PC-3 (cell line): ENCODE measurements at regions of chr6 and their contacts with region 1.

Region 1: DNA sequence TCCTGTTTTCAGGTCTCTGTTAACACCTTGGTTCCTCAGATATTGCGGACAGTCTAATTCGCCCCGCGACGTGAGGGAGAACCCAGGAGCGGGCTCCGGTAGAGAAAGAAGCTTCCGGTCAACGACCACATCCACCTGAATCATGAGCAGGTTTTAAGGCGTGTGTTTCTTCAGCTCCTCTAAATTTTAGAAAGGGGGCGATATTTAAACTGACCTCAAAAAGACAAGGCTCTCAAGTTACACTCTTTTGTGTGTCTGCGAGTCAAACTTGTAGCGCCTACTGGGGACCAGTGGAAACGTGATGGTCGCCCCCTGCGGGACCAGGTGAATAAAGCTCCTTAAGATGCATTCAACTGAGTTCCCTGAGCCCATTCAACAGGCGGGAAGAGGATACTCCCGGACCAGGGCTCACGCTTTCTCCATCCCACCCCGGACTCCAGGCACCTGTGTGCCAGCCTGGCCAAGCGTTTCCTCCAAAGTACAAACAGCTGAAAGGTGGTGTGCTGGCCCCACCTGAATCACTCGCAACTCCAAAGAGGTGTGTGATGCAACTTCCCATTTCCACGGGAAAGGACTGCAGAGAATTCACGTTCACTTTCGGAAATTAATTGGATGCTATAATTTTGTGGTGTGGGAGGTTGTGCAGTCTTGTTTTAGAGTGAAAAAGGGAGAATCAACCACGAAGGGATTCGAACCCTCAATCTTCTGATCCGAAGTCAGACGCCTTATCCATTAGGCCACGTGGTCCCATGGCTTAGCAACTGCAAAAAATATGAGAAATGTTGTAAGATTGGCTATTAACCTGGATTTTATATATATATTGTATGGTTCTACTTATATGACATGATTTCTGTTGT is 17.0 kb downstream of the GPX5 start:
- DNase-seq: peak; percentile 95
- ATAC-seq: peak; percentile 91
- H3K4me3 ChIP-seq: peak overlapping the region; percentile 70
- H3K27ac ChIP-seq: no peak overlapping the region
- H3K4me1 ChIP-seq: peaks cover 7% of the 10 kb centered on the region; the same call in 1 of the 2 replicates
- H3K27me3 ChIP-seq: peaks cover 24% of the 10 kb centered on the region
- CTCF ChIP-seq: peak; percentile 85

Region 2: DNA sequence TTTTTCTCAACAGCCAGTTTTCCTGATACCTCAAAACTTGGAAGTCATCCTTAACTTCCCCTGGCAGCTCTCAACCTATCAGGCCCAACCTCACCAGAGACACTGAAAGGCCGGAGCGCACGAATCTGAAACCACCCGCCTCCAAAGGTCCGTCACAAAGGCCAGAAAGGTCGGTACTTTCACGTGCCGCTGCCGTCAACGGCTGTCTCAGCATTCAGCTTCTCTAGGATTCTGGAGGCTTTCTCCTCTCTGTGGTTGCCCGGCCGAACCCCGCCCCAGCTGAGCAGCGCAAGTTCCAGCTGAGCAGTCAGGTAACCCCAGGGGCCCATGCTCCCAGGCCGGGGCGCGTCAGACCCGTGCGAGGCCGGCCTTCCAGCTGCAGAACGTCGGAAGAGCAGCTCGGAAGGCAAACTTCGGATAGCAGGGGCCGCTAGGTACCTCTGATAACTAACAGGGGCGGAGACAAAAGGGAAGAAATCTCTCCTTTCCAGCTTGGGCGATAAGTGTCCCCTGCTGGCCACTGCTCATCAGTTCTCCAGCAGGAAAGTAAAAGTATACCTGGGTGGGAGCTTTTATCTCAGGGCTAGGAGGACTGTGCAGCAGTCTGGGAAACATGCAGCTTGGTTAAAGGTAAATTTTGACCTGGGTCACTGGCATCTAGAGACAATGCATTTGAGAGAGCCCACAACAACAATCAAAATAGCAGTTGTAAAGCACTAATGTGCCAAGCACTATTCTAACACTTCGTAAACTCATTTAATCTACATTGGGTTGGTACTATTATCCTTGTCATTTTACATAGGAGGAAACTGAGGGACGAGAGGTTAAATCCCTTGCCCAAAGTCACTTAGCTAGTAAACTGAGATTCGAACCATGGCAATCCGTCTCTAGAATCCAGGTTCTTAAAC is 159.2 kb before region 1 on chr6:
- CTCF ChIA-PET with region 1: no interaction called
- POLR2A ChIA-PET with region 1: no interaction called
- intact Hi-C with region 1: loop called (anchors 5 kb)
- DNase-seq: peak; percentile 89
- ATAC-seq: peak; percentile 93
- H3K4me3 ChIP-seq: peak overlapping the region; percentile 78
- H3K27ac ChIP-seq: peak overlapping the region; percentile 38
- H3K4me1 ChIP-seq: peaks cover 12% of the 10 kb centered on the region
- H3K27me3 ChIP-seq: no peaks in the 10 kb centered on the region
- CTCF ChIP-seq: peak; percentile 80

Region 3: DNA sequence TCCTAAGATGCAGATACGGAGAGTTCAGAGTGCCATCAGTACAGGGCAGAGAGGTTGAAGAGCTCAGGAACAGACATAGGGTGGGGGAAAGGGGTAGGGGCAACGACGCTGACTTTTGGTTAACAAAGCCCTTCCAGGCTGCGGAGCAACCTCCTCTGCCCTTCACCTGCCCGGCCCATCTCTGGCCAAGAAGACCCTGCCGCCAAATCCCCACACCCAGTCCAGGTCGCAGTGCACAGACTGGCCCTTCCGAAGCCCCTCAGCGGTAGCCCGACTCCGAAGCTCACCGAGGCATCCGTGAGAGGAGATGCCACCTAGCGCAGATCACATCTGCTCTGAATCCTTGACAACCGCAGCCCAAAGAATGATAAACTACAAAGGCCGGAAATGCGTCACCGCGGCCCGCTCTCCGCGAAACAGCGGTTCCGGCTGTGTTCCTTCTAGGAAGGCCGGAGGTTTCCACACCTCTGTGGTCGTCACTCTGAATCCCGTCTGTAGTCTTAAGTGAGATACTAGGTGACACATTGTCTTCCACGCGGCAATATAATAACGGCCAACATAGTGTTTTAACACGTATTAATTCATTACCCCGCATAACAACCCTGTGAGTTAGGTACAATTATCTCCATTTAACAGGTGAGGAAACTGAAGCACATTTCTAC is 99.4 kb before region 1 on chr6 and contains the start of gene ZSCAN23:
- CTCF ChIA-PET with region 1: no interaction called
- POLR2A ChIA-PET with region 1: no interaction called
- intact Hi-C with region 1: loop called (anchors 2 kb)
- DNase-seq: peak; percentile 91
- ATAC-seq: peak; percentile 98
- H3K4me3 ChIP-seq: peak within 1 kb of the TSS; percentile 88
- H3K27ac ChIP-seq: no peak within 1 kb of the TSS
- H3K4me1 ChIP-seq: peaks cover 9% of the 10 kb centered on the region; the same call in 1 of the 2 replicates
- H3K27me3 ChIP-seq: no peaks in the 10 kb centered on the region
- CTCF ChIP-seq: no peak; the same call in 1 of the 2 replicates
- total RNA-seq, gene ZSCAN23: 2.2 and 3.4 TPM in 2 replicates

Region 4: DNA sequence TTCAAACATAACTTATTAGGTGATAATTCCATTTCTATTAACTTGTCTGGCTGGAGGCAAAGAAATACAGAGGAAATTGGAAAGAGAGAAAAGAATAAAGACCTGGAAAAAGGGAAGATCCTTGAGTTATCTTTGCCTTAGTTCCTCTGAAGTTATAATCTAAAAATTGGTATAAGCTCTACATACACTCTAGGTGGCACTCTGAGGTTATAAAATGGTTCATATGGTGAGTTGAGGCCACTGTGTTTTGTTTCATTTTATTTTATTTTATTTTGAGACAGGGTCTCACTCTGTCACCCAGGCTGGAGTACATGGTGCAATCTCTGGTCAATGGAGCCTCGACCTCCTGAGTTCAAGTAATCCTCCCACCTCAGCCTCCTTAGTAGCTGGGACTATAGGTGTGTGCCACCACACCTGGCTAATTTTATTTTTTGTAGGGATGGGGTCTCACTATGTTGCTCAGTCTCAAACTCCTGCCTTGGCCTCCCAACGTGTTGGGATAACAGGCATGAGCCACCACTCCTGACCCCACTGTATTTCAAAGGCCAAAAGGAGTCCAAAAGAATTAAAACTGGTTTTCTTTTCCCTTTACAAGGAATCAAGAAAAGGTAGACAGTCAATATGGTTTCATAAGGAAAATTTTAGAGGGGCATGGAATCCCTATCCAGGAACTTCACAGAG is 46.4 kb before region 1 on chr6:
- CTCF ChIA-PET with region 1: interaction called, 5 read pairs
- POLR2A ChIA-PET with region 1: no interaction called
- intact Hi-C with region 1: loop called (anchors 2 kb)
- DNase-seq: peak; percentile 26
- ATAC-seq: peak; percentile 35; the same call in 1 of the 2 replicates
- H3K4me3 ChIP-seq: no peak overlapping the region
- H3K27ac ChIP-seq: no peak overlapping the region
- H3K4me1 ChIP-seq: peaks cover 13% of the 10 kb centered on the region
- H3K27me3 ChIP-seq: peaks cover 21% of the 10 kb centered on the region; the same call in 1 of the 2 replicates
- CTCF ChIP-seq: peak; percentile 53

Region 5: DNA sequence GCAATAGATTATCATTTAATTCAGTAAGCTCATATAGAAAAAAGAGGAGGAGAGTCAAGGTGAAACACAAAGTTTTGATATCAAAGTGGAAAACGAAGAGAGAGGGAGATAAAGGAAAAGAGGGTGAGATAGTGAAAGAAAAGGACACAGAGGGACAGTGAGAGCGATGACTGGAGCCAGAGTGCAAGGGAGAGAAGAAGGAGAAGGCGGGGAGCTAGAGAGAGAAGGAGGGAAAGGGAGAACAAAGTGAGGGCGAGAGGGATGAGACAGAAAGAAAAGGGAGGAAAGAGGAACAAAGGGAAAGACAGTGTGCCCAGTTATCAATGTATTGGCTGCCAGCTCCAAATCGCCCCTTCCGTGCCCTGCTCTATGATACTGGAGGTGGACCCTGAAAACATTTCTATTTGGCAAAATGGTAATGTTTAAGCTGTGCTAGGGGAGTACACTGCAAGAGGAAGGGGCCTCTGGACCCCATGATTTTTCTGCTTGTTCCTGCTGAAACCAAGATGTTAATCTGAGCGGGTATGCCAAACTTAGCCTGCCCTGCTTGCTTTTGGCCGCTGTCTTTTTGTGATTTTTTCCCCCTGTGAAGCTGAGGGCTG is 10.8 kb after region 1 on chr6:
- CTCF ChIA-PET with region 1: no interaction called
- POLR2A ChIA-PET with region 1: no interaction called
- intact Hi-C with region 1: no loop called
- DNase-seq: no peak
- ATAC-seq: no peak
- H3K4me3 ChIP-seq: no peak overlapping the region
- H3K27ac ChIP-seq: no peak overlapping the region
- H3K4me1 ChIP-seq: no peaks in the 10 kb centered on the region
- H3K27me3 ChIP-seq: peaks cover 34% of the 10 kb centered on the region
- CTCF ChIP-seq: no peak

Region 6: DNA sequence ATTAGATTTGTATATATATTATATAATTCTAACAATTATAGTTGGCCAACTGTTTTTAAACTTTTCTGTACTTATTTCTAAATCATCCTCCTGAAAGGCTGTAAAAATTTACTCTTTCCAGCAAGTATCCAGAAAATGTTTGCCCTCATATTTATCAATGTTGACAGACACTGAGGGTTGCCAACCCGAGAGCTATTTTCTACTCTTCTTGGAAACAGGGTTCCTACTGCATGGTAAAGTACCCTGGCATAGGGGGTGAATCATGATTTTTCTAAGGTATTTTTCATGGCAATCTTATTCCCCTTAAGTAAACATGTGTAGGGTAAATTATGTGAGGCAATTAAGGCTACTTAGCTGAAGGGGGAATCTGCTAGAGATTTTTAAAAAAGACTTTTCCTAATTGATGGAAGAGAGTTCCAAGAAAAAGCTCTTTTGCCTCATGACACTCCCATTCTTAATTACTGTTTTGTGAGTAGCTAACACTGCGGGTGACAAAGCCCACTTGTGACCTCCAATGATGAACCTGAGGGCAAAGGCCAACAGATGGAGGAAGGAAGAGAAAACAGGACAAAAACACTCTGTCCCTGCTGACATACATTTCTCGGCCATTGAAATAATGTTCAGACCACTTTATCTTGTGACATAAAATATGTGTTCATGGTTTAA is 20.9 kb after region 1 on chr6:
- CTCF ChIA-PET with region 1: no interaction called
- POLR2A ChIA-PET with region 1: no interaction called
- intact Hi-C with region 1: loop called (anchors 2 kb)
- DNase-seq: no peak
- ATAC-seq: no peak
- H3K4me3 ChIP-seq: no peak overlapping the region
- H3K27ac ChIP-seq: no peak overlapping the region
- H3K4me1 ChIP-seq: no peaks in the 10 kb centered on the region
- H3K27me3 ChIP-seq: peaks cover 16% of the 10 kb centered on the region; the same call in 1 of the 2 replicates
- CTCF ChIP-seq: no peak

Region 7: DNA sequence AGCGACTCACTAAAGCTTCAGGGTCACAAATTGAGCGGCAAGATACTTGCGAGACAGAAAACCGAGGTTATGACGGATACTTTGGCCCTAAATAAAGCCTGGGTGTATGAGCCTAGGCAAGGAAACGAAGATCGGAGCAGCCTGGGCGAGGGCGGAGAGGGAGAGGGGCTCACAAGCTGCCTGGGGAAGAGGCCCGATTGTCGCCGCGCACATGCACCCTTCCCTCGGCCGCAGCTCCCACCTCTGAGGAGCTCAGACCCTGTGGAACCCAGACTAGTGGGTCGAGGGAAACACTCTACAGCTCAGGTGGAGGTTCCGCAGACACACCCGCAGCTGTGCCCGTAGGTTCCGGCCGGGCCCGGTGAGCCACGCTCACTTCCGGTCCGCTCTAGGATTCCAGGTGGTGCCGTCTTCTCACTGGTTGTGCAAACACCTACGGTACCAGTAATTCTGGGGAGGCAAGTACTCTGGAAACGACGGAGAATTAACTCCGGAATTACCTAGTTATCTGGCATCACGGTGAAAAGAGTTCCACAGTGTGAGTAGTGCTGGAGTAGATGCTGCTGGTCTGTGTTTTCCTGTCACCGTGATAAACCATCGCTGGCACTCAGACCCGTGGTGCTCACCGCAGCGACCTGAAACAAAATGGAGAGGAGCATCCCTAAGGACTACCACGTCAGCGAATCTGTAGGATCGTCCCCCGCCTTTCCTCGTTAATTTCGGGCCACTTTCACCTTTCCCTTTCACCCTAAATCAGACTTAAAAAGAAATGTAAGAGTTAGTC is 44.5 kb after region 1 on chr6:
- CTCF ChIA-PET with region 1: interaction called, 5 read pairs
- POLR2A ChIA-PET with region 1: no interaction called
- intact Hi-C with region 1: loop called (anchors 2 kb)
- DNase-seq: peak; percentile 85
- ATAC-seq: peak; percentile 98
- H3K4me3 ChIP-seq: peak overlapping the region; percentile 89
- H3K27ac ChIP-seq: peak overlapping the region; percentile 33
- H3K4me1 ChIP-seq: peaks cover 24% of the 10 kb centered on the region
- H3K27me3 ChIP-seq: no peaks in the 10 kb centered on the region
- CTCF ChIP-seq: no peak